PC-9 (cell line): ENCODE measurements at regions of chr6 and their contacts with region 1.

Region 1: GRCh38 chr6:24520929-24521546 is 26.3 kb downstream of the ALDH5A1 start:
- DNase-seq: peak in 1 of 2 experiments; percentile 55
- H3K4me3 ChIP-seq: no peak overlapping the region
- H3K27ac ChIP-seq: no peak overlapping the region
- H3K4me1 ChIP-seq: no peaks in the 10 kb centered on the region
- H3K27me3 ChIP-seq: no peaks in the 10 kb centered on the region
- CTCF ChIP-seq: peak; percentile 72

Region 2: GRCh38 chr6:24472177-24472576 is 48.9 kb before region 1 on chr6:
- CTCF ChIA-PET with region 1: no interaction called
- POLR2A ChIA-PET with region 1: no interaction called
- intact Hi-C with region 1: no loop called
- DNase-seq: peak in 1 of 2 experiments; percentile 88
- H3K4me3 ChIP-seq: peak overlapping the region; percentile 10; the same call in 1 of the 2 replicates
- H3K27ac ChIP-seq: peak overlapping the region; percentile 93
- H3K4me1 ChIP-seq: peaks cover 25% of the 10 kb centered on the region
- H3K27me3 ChIP-seq: no peaks in the 10 kb centered on the region
- CTCF ChIP-seq: no peak

Region 3: DNA sequence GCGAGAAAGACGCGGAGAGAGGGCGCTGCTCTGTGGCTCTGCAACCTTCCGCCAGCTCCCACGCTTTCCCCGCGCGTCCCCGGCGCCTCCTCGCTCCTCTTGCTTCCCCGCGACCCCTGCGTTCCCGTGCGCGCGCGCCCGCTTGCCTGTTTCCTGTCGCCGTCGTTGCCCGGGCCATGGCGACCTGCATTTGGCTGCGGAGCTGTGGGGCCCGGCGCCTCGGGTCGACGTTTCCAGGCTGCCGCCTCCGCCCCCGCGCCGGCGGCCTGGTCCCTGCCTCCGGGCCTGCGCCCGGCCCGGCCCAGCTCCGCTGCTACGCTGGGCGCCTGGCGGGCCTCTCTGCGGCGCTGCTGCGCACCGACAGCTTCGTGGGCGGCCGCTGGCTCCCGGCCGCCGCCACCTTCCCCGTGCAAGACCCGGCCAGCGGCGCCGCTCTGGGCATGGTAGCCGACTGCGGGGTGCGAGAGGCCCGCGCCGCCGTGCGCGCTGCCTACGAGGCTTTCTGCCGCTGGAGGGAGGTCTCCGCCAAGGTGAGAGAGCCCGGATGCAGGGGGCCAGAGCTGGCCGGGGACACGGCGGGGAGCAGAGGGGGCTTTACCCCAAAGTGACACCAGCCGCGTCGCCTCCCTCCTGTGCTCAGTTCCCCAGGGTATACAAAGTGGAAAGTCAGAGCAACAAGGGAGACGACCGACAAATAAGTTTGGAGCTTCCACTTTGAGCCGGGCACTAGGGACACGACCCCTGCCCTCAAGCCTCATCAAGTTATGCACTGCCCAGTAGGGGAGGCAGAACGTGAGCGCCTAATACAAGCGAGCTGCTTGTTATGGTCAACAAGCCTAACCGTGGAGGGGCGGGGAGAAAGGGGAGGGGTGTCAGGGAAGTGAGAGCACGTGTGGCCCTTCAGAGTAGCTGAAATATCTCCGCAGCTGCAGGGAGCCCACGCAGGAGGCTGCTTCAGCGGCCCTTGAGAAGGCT is 25.9 kb before region 1 on chr6 and contains the start of gene ALDH5A1:
- CTCF ChIA-PET with region 1: interaction called, 10 read pairs
- POLR2A ChIA-PET with region 1: no interaction called
- intact Hi-C with region 1: no loop called
- DNase-seq: peak; percentile 35 to 56
- H3K4me3 ChIP-seq: peak within 1 kb of the TSS; percentile 92
- H3K27ac ChIP-seq: no peak within 1 kb of the TSS
- H3K4me1 ChIP-seq: peaks cover 25% of the 10 kb centered on the region
- H3K27me3 ChIP-seq: no peaks in the 10 kb centered on the region
- CTCF ChIP-seq: no peak; the same call in 1 of the 2 replicates
- total RNA-seq, gene ALDH5A1: 19.1 and 21.2 TPM in 2 replicates

Region 4: GRCh38 chr6:24689964-24690363 is 168.9 kb after region 1 on chr6:
- CTCF ChIA-PET with region 1: no interaction called
- POLR2A ChIA-PET with region 1: no interaction called
- intact Hi-C with region 1: loop called (anchors 1 kb)
- DNase-seq: no peak
- H3K4me3 ChIP-seq: no peak overlapping the region
- H3K27ac ChIP-seq: no peak overlapping the region
- H3K4me1 ChIP-seq: peaks cover 11% of the 10 kb centered on the region
- H3K27me3 ChIP-seq: no peaks in the 10 kb centered on the region
- CTCF ChIP-seq: no peak

Region 5: GRCh38 chr6:24699521-24700359 is 178.7 kb after region 1 on chr6:
- CTCF ChIA-PET with region 1: interaction called, 11 read pairs
- POLR2A ChIA-PET with region 1: interaction called, 6 read pairs
- intact Hi-C with region 1: loop called (anchors 1 kb)
- DNase-seq: no peak
- H3K4me3 ChIP-seq: no peak overlapping the region
- H3K27ac ChIP-seq: no peak overlapping the region
- H3K4me1 ChIP-seq: no peaks in the 10 kb centered on the region
- H3K27me3 ChIP-seq: no peaks in the 10 kb centered on the region
- CTCF ChIP-seq: no peak